ENCODE measurements at regions of chr12 and their contacts with region 1.

Region 1: DNA sequence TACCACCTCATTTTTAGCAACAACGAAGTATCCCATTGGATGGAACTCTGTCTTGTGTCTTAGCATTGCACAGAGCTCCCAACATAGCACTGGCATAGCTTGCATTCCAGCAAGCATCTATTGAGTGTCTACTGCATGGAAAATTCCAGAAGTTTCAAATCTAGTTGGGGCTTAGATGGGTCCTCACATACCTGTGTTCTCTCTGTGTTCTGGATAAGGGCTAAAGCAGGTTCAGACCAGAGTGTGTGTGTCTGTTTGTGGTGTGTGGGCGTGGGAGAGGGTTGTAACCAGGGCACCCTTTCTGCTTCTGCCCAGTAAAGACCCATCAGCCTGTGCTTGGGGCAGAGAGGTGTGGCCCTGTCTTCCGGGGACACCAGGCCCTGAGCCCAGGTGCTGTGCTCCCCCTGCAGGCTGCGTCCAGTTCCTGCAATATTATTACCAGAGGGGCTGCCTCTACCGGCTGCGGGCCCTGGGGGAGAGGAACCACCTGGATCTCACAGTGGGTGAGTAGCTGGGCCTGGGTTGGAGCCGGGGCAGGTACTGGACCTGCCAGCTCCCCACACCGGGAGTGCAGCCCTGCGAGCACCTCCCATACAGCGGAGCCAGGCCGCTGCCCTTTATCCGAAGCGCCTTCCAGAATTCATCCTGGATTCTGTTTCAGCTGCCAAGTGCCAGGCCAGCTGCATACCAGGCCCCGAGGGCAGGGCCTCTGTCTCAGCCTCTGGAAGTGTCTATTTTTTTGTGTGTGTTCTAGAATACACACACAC is 20.3 kb downstream of the RHOF start:
- DNase-seq: peak; percentile 74
- H3K4me3 Mint-ChIP-seq: no peak overlapping the region
- H3K27ac Mint-ChIP-seq: peak overlapping the region; percentile 71
- H3K4me1 Mint-ChIP-seq: peaks cover 9% of the 10 kb centered on the region
- H3K27me3 Mint-ChIP-seq: no peaks in the 10 kb centered on the region

Region 2: DNA sequence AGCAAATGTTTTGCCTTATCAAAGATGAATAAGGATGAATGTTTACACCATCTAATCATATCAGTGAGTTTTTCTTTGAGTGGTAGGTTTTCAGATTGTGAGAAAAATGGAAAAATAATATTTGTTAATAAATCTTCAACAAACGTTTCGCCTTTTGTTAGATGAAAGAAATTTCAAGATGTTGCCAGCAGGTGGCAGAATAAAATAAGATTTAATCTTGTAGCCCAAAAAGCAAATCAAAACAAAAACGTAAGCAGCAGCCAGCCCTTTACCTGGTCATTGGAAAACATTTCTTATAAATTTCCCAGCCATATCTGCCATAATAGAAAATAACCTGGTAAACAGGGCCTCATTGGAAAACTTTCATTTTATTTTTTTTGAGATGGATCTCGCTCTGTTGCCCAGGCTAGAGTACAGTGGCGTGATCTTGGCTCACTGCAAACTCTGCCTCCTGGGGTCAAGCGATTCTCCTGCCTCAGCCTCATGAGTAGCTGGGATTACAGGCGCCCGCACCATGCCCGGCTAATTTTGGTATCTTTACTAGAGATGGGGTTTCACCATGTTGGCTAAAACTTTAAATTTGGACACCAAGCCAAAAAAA is 76.0 kb before region 1 on chr12:
- intact Hi-C with region 1: loop called (anchors 1 kb)
- DNase-seq: no peak
- H3K4me3 Mint-ChIP-seq: no peak overlapping the region
- H3K27ac Mint-ChIP-seq: no peak overlapping the region
- H3K4me1 Mint-ChIP-seq: peaks cover 1% of the 10 kb centered on the region
- H3K27me3 Mint-ChIP-seq: peaks cover 6% of the 10 kb centered on the region

Region 3: GRCh38 chr12:121712461-121713256 is 60.5 kb before region 1 on chr12 and contains the start of gene TMEM120B:
- intact Hi-C with region 1: loop called (anchors 5 kb)
- DNase-seq: peak; percentile 82
- H3K4me3 Mint-ChIP-seq: peak within 1 kb of the TSS; percentile 97
- H3K27ac Mint-ChIP-seq: peak within 1 kb of the TSS; percentile 85
- H3K4me1 Mint-ChIP-seq: peaks cover 18% of the 10 kb centered on the region
- H3K27me3 Mint-ChIP-seq: peaks cover 1% of the 10 kb centered on the region
- total RNA-seq, gene TMEM120B: 14.1 and 14.2 TPM in 2 replicates

Region 4: DNA sequence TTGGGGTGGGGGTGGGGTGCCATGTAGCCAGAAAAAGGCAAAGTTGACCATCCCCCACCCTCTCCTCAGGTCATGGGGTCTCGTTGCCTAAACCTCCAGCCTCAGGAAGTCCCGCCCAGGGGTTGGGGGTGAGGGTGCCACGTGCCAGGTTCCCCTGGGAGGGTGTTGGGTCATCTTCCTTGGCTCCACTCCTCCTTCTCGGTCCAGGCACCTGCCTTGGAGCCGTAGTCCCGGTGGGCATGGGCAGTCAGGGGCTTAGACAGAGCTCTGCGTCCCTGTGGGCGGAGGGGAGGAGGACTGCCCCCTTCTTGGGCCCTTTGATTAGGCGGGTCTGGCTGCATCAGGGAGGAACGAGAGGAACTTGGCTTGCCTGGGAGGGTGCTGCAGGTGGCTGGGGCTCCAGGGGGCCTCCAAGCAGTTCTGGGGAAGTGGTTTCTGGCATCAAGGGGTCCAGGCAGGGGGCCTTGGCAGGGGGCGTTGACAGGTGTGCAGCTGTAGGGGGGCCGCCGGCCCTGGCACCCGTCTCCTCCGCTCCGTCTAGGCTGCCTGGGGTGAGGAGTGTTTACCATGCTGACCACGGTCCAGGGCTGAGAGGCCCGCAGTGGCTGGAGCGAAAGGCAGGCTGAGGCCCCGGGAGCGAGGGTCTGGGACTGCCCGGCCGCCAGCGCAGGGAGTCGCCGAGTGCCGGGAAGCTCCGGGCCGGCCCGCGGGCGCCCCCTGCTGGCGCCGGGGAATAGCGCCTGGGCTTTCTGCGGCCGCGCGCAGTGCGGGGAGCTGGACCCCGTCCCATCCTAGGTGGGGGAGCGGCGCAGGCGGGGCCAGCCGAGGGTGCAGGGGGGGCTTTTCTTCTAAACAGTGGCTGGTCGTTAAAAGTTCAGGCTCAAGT is 38.5 kb after region 1 on chr12:
- intact Hi-C with region 1: loop called (anchors 5 kb)
- DNase-seq: peak; percentile 62
- H3K4me3 Mint-ChIP-seq: peak overlapping the region; percentile 71
- H3K27ac Mint-ChIP-seq: no peak overlapping the region
- H3K4me1 Mint-ChIP-seq: peaks cover 31% of the 10 kb centered on the region
- H3K27me3 Mint-ChIP-seq: no peaks in the 10 kb centered on the region

Measured in activated T-helper 2 cell treated with anti-CD3 and anti-CD28 coated beads, Interferon-gamma antibody, Interleukin-2, Interleukin-4, amounts not matched to agents 10 μg/mL and 5 μg/mL and 100 μg/mL, durations not matched to agents 14 hours and 24 hours and 36 hours (primary cell).